ENCODE measurements at regions of chr2 and their contacts with region 1.

Region 1: DNA sequence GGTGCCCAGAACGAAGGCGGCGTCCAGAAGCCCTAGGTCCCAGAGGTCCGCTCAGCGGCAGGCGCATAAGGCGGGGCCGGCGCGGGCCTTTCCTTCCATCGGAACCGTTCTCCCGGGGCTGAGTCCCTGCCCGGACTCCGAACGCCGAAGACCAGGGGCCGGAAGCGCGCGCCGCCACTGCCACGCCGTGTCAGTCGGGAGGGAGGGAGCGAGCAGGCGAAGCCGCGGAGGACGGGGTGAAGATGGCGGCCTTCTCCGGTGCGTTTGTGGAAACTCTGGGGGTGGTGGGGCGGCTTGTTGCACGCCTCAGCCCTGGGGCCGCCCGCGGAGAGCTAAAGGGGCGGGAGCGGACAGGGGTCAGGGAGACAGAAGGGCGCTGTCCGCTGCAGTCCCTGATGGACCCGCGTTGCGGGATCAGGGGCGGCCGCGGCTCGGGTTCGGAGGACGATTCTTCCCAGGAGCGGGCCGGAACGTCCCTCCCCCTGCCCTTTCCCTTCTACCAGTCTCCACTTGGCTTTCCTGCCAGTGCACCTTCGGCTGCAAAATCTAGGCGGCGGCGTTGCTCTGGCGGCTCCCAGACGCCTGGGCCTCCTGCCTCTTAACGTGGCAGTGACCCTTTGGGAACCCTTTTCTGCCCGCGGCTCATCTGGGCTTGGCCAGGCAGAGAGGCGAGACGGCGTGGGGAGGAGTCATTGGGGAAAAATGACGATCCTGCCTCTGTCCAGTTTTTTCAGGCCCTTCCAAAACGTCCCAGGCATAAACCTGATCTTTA is at the start of gene DDX1:
- DNase-seq: peak; percentile 80
- ATAC-seq: peak; percentile 95
- H3K4me3 ChIP-seq: peak within 1 kb of the TSS; percentile 78 to 91 (median 85)
- H3K27ac ChIP-seq: peak within 1 kb of the TSS; percentile 90
- H3K4me1 ChIP-seq: peaks cover 35% of the 10 kb centered on the region
- H3K27me3 ChIP-seq: no peaks in the 10 kb centered on the region; a peak in 1 of 5 replicates
- CTCF ChIP-seq: peak; percentile 41
- EP300 ChIP-seq: peak; percentile 24 to 59; a peak in 1 of 4 replicates
- POLR2A ChIP-seq: peak; percentile 94 to 95
- RAD21 ChIP-seq: peak; percentile 73
- total RNA-seq, gene DDX1: 130 and 254 TPM in 2 replicates

Region 2: GRCh38 chr2:14903709-14904374 is 688.0 kb before region 1 on chr2:
- CTCF ChIA-PET with region 1: interaction called, 3 read pairs
- POLR2A ChIA-PET with region 1: no interaction called
- in situ Hi-C with region 1: loop called (anchors 25 kb)
- intact Hi-C with region 1: loop called (anchors 1 kb)
- DNase-seq: peak; percentile 72
- ATAC-seq: peak; percentile 99
- H3K4me3 ChIP-seq: no peak overlapping the region
- H3K27ac ChIP-seq: no peak overlapping the region
- H3K4me1 ChIP-seq: no peaks in the 10 kb centered on the region
- H3K27me3 ChIP-seq: no peaks in the 10 kb centered on the region; a peak in 1 of 5 replicates
- CTCF ChIP-seq: peak; percentile 87
- EP300 ChIP-seq: no peak
- POLR2A ChIP-seq: no peak
- RAD21 ChIP-seq: peak; percentile 89

Region 3: DNA sequence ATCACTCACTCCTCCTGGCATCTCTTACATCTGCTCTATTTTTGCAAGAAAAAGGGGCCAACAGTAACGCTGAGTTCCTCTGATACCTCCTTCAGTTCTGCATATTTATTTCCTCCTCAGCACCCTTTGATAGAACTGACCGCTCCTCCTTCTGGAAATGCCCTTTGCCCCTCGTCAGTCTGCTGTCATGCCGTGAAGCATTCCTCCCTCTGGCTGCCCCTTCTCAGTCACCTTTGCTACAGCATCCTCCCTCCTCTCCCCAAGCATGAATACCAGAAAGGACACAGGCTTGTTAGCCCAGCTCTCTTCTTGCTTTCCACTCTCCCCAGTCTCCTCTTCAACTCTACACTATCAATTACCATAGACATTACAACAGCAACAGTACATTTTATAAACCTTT is 166.2 kb before region 1 on chr2:
- CTCF ChIA-PET with region 1: interaction called, 10 read pairs
- POLR2A ChIA-PET with region 1: no interaction called
- in situ Hi-C with region 1: loop called (anchors 10 kb)
- intact Hi-C with region 1: no loop called
- DNase-seq: no peak
- ATAC-seq: no peak
- H3K4me3 ChIP-seq: no peak overlapping the region
- H3K27ac ChIP-seq: no peak overlapping the region
- H3K4me1 ChIP-seq: no peaks in the 10 kb centered on the region
- H3K27me3 ChIP-seq: no peaks in the 10 kb centered on the region
- CTCF ChIP-seq: no peak
- EP300 ChIP-seq: no peak
- POLR2A ChIP-seq: no peak
- RAD21 ChIP-seq: no peak

Region 4: DNA sequence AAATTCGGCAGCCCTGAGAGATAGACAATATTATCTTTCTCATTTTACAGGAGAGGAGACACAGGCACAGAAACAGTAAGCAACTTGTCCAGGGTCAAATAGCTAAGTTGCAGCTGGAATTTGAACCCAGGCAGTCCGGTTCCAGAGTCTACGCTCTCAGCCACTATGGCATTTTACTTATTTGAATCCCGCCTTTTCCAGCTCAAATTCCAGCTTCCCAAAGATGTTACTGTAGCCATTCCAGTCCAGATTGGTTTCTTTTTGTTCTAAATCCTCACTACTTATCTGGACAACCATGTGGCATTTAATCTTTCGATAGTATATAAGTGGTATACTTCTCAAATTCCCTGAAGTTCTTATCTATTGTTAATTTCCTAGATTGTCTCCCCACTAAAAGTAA is 156.4 kb before region 1 on chr2:
- CTCF ChIA-PET with region 1: interaction called, 10 read pairs
- POLR2A ChIA-PET with region 1: interaction called, 3 read pairs
- in situ Hi-C with region 1: loop called (anchors 10 kb)
- intact Hi-C with region 1: loop called (anchors 1 kb)
- DNase-seq: peak; percentile 86
- ATAC-seq: peak; percentile 96
- H3K4me3 ChIP-seq: no peak overlapping the region; a peak in 1 of 6 replicates
- H3K27ac ChIP-seq: peak overlapping the region; percentile 63
- H3K4me1 ChIP-seq: peaks cover 42% of the 10 kb centered on the region
- H3K27me3 ChIP-seq: no peaks in the 10 kb centered on the region
- CTCF ChIP-seq: no peak
- EP300 ChIP-seq: peak in 1 of 2 experiments; percentile 72; a peak in 1 of 4 replicates
- POLR2A ChIP-seq: no peak
- RAD21 ChIP-seq: no peak

Region 5: GRCh38 chr2:15560988-15561573 is 30.8 kb before region 1 on chr2 and contains the start of gene NBAS:
- CTCF ChIA-PET with region 1: no interaction called
- POLR2A ChIA-PET with region 1: interaction called, 3 read pairs
- in situ Hi-C with region 1: no loop called
- intact Hi-C with region 1: loop called (anchors 2 kb)
- DNase-seq: peak; percentile 85
- ATAC-seq: peak; percentile 89
- H3K4me3 ChIP-seq: peak within 1 kb of the TSS; percentile 92 to 95 (median 93)
- H3K27ac ChIP-seq: peak within 1 kb of the TSS; percentile 70
- H3K4me1 ChIP-seq: peaks cover 46% of the 10 kb centered on the region
- H3K27me3 ChIP-seq: peaks cover 0 to 9% of the 10 kb centered on the region in 2 experiments; a peak in 2 of 5 replicates
- CTCF ChIP-seq: no peak
- EP300 ChIP-seq: peak; percentile 29 to 52; a peak in 1 of 4 replicates
- POLR2A ChIP-seq: peak; percentile 80 to 88
- RAD21 ChIP-seq: no peak; the same call in 1 of the 2 replicates
- total RNA-seq, gene NBAS: 58.7 and 61.4 TPM in 2 replicates

Region 6: GRCh38 chr2:15927581-15928218 is 335.8 kb after region 1 on chr2:
- CTCF ChIA-PET with region 1: no interaction called
- POLR2A ChIA-PET with region 1: no interaction called
- in situ Hi-C with region 1: no loop called
- intact Hi-C with region 1: no loop called
- DNase-seq: no peak
- ATAC-seq: no peak
- H3K4me3 ChIP-seq: no peak overlapping the region
- H3K27ac ChIP-seq: no peak overlapping the region
- H3K4me1 ChIP-seq: 0 out of 2 replicates have a peak, but pooled peaks cover 7% of the 10 kb centered on the region
- H3K27me3 ChIP-seq: no peaks in the 10 kb centered on the region
- CTCF ChIP-seq: no peak
- EP300 ChIP-seq: no peak
- POLR2A ChIP-seq: no peak
- RAD21 ChIP-seq: no peak